WTC11 (cell line): ENCODE measurements at regions of chr11 and their contacts with region 1.

Region 1: DNA sequence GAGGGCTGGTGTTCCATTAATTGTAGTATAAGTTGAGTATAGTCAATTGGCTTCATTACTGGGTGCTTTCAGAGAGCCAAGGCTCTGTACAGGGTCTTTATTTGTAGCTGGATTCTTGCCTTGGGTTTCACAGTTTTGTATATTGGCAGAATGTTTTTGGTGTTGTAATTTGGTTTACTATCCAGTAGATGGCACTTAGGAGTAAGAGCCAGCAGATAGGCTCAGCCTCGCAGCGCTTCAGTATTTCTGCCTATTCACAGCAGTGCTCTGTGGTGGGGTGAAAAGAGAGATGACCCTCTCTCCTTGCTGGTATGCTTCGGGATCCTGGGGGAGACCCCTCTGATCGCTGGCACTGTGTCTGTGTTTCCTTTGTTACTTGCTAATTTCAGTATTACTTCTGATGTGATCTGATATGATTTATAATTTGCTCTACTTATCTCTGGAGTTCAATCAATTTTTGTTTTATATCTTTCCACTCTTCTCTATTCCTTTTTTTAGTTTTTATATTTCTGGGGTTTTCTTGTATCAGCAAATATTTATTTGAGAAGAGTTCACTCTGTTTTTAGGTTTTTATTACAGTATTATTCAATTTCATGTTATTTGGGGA is 52.2 kb downstream of the ANO5 start:
- DNase-seq: peak; percentile 46
- ATAC-seq: peak; percentile 100
- H3K4me3 Mint-ChIP-seq: no peak overlapping the region
- H3K27ac Mint-ChIP-seq: no peak overlapping the region
- H3K4me1 Mint-ChIP-seq: peaks cover 14% of the 10 kb centered on the region
- H3K27me3 Mint-ChIP-seq: no peaks in the 10 kb centered on the region
- CTCF ChIP-seq: peak; percentile 33; the same call in 1 of the 2 replicates

Region 2: DNA sequence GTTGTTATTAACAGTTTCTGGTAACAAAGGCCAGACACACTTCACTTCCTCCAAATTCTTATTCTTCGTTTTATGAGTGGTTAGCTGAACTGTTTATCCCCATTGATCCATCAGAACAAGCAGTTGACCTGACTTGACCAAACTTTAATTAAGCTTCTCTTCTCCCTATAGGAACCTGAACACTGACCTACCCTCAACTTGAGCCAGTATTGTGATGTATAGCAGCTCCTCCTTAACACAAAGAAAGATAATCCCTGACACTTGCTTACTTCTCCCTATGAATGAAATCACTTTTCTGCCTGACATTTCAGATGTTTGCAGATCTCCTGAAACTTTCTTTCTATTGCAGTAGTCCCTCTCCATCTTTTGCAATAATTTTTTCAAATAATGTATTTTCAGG is 10.3 kb before region 1 on chr11:
- CTCF ChIA-PET with region 1: interaction called, 21 read pairs
- POLR2A ChIA-PET with region 1: no interaction called
- DNase-seq: no peak
- ATAC-seq: peak; percentile 100
- H3K4me3 Mint-ChIP-seq: peak overlapping the region; percentile 37
- H3K27ac Mint-ChIP-seq: peak overlapping the region; percentile 86; the same call in 1 of the 2 replicates
- H3K4me1 Mint-ChIP-seq: peaks cover 45% of the 10 kb centered on the region
- H3K27me3 Mint-ChIP-seq: peaks cover 5% of the 10 kb centered on the region; the same call in 1 of the 2 replicates
- CTCF ChIP-seq: no peak

Region 3: GRCh38 chr11:22304337-22304961 is 59.4 kb after region 1 on chr11:
- CTCF ChIA-PET with region 1: interaction called, 14 read pairs
- POLR2A ChIA-PET with region 1: no interaction called
- DNase-seq: no peak
- ATAC-seq: peak; percentile 53
- H3K4me3 Mint-ChIP-seq: no peak overlapping the region
- H3K27ac Mint-ChIP-seq: no peak overlapping the region
- H3K4me1 Mint-ChIP-seq: no peaks in the 10 kb centered on the region
- H3K27me3 Mint-ChIP-seq: no peaks in the 10 kb centered on the region
- CTCF ChIP-seq: peak; percentile 66

Region 4: DNA sequence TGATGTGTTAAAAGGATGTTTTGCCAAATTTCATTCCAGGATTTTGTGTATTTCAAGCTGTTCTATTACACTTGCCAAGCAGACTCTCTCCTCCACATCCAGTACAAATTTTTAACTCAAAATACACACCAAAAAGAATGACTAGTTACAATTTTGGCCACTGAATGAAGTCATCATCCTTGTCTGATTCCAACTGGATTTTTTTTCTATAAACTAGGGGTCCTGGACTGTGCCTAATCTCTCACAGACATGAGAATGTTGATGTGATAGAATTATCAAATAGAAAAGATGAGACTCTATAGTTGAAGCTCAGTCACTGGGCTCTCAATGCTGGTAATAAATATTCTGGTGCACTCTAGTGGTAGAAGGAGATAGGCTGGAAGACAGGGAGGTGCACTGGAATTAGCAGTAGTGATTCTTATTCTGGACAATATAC is 294.8 kb after region 1 on chr11:
- CTCF ChIA-PET with region 1: interaction called, 12 read pairs
- POLR2A ChIA-PET with region 1: no interaction called
- DNase-seq: no peak
- ATAC-seq: peak; percentile 85
- H3K4me3 Mint-ChIP-seq: no peak overlapping the region
- H3K27ac Mint-ChIP-seq: no peak overlapping the region
- H3K4me1 Mint-ChIP-seq: peaks cover 4% of the 10 kb centered on the region
- H3K27me3 Mint-ChIP-seq: no peaks in the 10 kb centered on the region
- CTCF ChIP-seq: no peak